Dendritic cell treated with granulocyte-macrophage colony-stimulating factor and Interleukin-4, amounts not matched to agents 40 ng/mL and 50 ng/mL, for 4 days (primary cell): ENCODE measurements at regions of chr21 and their contacts with region 1.

Region 1: GRCh38 chr21:44510508-44511210 is 29.3 kb downstream of the KRTAP10-1 start:
- H3K4me3 Mint-ChIP-seq: no peak overlapping the region
- H3K27ac Mint-ChIP-seq: no peak overlapping the region
- H3K4me1 Mint-ChIP-seq: peaks cover 10% of the 10 kb centered on the region
- H3K27me3 Mint-ChIP-seq: peaks cover 42% of the 10 kb centered on the region

Region 2: DNA sequence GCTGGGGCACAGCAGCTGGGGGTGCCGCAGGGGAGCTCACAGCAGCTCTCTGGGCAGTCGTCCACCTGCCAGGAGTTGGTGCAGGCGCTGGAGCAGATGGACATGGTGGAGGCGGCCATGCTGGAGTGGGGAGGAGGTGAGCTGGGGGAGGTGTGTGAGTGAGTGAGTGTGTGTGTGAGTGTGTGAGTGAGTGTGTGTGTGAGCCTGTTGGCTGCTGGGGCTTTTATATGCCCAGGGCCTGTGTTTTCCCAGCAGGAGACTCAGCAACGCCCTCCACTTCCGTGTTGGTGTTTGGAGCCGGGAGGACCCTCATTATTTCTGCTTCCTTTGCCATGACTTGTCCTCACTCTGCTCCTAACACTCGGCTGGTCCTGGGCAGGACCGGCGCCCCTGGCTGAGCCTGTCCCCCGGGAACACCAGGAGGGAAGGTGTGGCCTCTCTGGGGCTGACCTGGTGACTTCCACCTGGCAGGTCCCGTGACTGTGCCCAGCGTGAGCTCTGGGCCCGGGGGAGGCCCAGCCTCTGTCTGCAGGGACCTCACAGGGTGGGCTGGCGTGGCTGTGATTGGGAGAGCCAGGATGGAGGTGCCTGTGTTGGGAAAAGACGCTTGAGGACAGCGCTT is 40.8 kb after region 1 on chr21 and contains the start of gene KRTAP10-2:
- intact Hi-C with region 1: no loop called
- H3K4me3 Mint-ChIP-seq: no peak within 1 kb of the TSS
- H3K27ac Mint-ChIP-seq: no peak within 1 kb of the TSS
- H3K4me1 Mint-ChIP-seq: no peaks in the 10 kb centered on the region
- H3K27me3 Mint-ChIP-seq: peaks cover 65% of the 10 kb centered on the region

Region 3: GRCh38 chr21:44792702-44793591 is 282.3 kb after region 1 on chr21:
- intact Hi-C with region 1: loop called (anchors 2 kb)
- H3K4me3 Mint-ChIP-seq: no peak overlapping the region
- H3K27ac Mint-ChIP-seq: no peak overlapping the region
- H3K4me1 Mint-ChIP-seq: peaks cover 48% of the 10 kb centered on the region
- H3K27me3 Mint-ChIP-seq: no peaks in the 10 kb centered on the region

Region 4: GRCh38 chr21:44854664-44855446 is 344.2 kb after region 1 on chr21:
- intact Hi-C with region 1: no loop called
- H3K4me3 Mint-ChIP-seq: no peak overlapping the region
- H3K27ac Mint-ChIP-seq: no peak overlapping the region
- H3K4me1 Mint-ChIP-seq: peaks cover 62% of the 10 kb centered on the region
- H3K27me3 Mint-ChIP-seq: no peaks in the 10 kb centered on the region